Heart left ventricle (tissue), 16 donors: ENCODE measurements at regions of chr14 and their contacts with region 1.

Region 1: DNA sequence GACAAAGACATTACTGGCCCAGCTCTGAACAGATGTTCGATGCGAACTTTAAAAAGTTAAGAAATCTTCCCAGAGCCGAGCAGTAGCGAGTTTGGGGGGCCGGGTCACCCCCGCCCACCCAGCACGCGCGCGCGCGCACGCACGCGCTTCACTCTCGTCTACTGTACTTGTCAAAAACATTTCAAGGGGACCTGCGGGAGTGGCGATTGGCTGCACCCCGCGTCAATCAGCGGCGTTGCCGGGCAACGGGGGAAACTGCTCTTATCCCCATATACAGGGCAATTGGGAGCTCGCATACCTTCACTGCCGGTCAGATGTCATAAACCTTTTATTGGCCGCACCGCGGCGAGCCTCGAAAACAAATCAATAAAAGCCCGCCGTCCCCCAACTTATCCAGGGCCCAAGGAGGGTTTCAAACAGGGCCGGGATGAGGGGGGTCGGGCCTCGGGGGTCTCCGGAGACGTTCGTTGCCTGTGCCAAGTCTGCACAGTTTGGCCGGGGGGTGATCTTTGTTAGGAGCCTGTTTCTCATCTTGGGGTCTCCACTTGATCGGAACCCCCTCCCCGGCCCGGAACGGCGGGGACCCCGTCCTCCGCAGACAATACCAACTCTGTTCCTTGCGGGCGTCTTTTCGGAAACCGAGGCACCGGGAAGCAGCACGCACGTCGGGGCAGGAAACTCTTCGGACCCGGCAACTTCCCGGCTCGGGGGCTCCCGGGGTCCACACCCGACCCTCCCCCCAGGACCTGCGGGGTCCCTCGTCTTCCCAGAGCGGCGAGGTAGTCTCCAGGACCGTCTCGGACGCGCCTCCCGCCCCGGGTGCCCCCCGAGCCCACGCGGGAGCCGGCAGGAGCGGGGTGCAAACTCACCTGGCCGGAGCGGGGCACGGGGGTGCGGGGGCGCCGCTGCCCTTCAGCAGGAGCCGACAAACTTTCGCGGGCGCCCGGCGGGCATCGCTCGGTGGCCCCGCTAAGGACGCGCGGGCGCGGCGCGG is 734 bp downstream of the FOXN3 start:
- DNase-seq: peak; percentile 97 to 100 (median 99)
- ATAC-seq: peak; percentile 85 to 92 (median 88)
- H3K4me3 ChIP-seq: peak overlapping the region; percentile 66 to 98 (median 94)
- H3K27ac ChIP-seq: peak overlapping the region; percentile 80 to 99 (median 94)
- H3K4me1 ChIP-seq: peaks cover 0 to 44% (median 30%) of the 10 kb centered on the region in 12 donors
- H3K27me3 ChIP-seq: no peaks in the 10 kb centered on the region
- CTCF ChIP-seq: no peak
- POLR2A ChIP-seq: peak in 1 of 2 donors; percentile 56

Region 2: DNA sequence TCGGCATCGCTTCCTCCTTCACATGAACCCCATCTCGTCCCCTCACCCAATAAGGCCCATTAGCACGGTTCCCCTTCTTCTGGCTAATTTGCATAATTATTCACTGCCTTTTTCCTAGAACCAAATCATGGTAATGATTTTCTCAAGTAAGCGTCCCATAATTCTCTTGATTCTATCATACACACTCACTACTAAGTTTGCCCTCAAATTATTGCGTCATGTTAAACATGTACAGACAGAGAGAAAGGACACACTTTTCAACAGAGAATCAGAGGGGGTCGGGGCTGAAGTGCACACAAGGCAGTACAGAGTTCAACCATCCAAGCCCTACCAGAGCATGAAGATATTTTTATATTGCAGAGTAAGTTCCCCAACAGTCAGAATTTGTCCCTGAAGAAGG is 255.9 kb before region 1 on chr14:
- intact Hi-C with region 1: no loop called
- DNase-seq: no peak
- ATAC-seq: no peak
- H3K4me3 ChIP-seq: no peak overlapping the region
- H3K27ac ChIP-seq: no peak overlapping the region
- H3K4me1 ChIP-seq: peaks cover 0 to 20% (median 13%) of the 10 kb centered on the region in 12 donors
- H3K27me3 ChIP-seq: no peaks in the 10 kb centered on the region
- CTCF ChIP-seq: no peak
- POLR2A ChIP-seq: no peak

Region 3: GRCh38 chr14:89185919-89186855 is 230.1 kb before region 1 on chr14:
- intact Hi-C with region 1: loop called in 3 of 10 experiments (anchors 5 to 10 kb)
- DNase-seq: no peak
- ATAC-seq: peak; percentile 61 to 76 (median 69)
- H3K4me3 ChIP-seq: no peak overlapping the region
- H3K27ac ChIP-seq: peak overlapping the region in 11 of 12 donors; percentile 50 to 80 (median 68)
- H3K4me1 ChIP-seq: peaks cover 4 to 47% (median 35%) of the 10 kb centered on the region in 12 donors
- H3K27me3 ChIP-seq: no peaks in the 10 kb centered on the region
- CTCF ChIP-seq: peak in 1 of 12 donors; percentile 25
- POLR2A ChIP-seq: no peak

Region 4: DNA sequence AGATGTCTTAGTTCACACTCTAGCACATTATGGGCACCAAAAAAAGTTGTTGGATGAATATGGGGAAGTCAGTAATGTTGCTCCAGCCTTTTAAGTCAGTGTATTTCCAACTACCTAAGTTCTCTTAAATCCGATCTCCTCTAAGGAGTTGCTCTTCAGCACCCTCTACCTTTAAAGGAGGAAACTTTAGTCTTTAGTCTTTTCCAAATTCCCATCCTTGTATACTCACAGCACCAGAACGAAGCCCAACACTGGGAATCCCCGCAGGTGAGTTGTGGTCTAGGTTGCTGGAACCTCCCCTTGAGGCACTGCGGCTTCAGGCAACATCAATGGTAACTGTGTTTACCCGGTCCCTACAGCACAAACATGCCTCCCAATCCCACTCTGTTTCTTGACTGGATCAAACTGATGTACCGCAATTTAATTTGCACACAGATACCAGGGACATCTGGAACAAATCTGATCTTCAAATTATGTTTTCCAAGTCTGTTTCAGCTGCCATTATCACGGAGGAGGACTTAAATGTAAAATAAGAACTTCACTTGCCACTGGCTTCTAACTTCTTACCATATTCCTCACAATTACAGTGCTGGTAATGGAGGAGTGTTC is 178.3 kb before region 1 on chr14:
- intact Hi-C with region 1: loop called in 2 of 10 experiments (anchors 5 to 10 kb)
- DNase-seq: no peak
- ATAC-seq: peak in 1 of 4 donors; percentile 14
- H3K4me3 ChIP-seq: no peak overlapping the region
- H3K27ac ChIP-seq: no peak overlapping the region
- H3K4me1 ChIP-seq: peaks cover 2 to 53% (median 23%) of the 10 kb centered on the region in 12 donors
- H3K27me3 ChIP-seq: no peaks in the 10 kb centered on the region
- CTCF ChIP-seq: peak in 11 of 12 donors; percentile 7 to 53 (median 26)
- POLR2A ChIP-seq: no peak

Region 5: DNA sequence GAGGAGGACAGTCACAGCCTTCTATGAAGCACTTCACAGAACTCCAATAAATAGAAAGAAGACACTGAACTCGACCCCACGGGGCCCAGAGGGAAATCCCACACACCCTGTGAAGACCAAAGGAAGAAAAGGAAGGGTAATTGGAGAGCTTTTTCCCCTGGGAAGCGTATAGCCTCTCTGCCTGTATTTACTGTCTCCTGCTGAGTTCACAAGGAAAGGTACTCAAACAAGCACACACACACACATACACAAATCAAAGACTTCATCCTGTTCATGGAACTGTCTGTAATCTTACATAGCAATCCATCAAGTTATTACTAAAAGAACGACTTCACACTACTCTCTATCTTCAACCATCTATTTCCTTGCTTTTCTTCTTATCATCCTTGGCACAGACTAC is 14.5 kb before region 1 on chr14:
- intact Hi-C with region 1: no loop called
- DNase-seq: peak in 1 of 5 donors; percentile 16
- ATAC-seq: no peak
- H3K4me3 ChIP-seq: no peak overlapping the region
- H3K27ac ChIP-seq: no peak overlapping the region
- H3K4me1 ChIP-seq: peaks cover 3 to 55% (median 33%) of the 10 kb centered on the region in 12 donors
- H3K27me3 ChIP-seq: no peaks in the 10 kb centered on the region
- CTCF ChIP-seq: no peak
- POLR2A ChIP-seq: no peak

Region 6: GRCh38 chr14:89445273-89445973 is 29.1 kb after region 1 on chr14:
- intact Hi-C with region 1: no loop called
- DNase-seq: no peak
- ATAC-seq: peak in 1 of 4 donors; percentile 33
- H3K4me3 ChIP-seq: no peak overlapping the region
- H3K27ac ChIP-seq: peak overlapping the region in 1 of 12 donors; percentile 83
- H3K4me1 ChIP-seq: peaks cover 0 to 57% (median 10%) of the 10 kb centered on the region in 12 donors
- H3K27me3 ChIP-seq: no peaks in the 10 kb centered on the region
- CTCF ChIP-seq: no peak
- POLR2A ChIP-seq: no peak

Region 7: DNA sequence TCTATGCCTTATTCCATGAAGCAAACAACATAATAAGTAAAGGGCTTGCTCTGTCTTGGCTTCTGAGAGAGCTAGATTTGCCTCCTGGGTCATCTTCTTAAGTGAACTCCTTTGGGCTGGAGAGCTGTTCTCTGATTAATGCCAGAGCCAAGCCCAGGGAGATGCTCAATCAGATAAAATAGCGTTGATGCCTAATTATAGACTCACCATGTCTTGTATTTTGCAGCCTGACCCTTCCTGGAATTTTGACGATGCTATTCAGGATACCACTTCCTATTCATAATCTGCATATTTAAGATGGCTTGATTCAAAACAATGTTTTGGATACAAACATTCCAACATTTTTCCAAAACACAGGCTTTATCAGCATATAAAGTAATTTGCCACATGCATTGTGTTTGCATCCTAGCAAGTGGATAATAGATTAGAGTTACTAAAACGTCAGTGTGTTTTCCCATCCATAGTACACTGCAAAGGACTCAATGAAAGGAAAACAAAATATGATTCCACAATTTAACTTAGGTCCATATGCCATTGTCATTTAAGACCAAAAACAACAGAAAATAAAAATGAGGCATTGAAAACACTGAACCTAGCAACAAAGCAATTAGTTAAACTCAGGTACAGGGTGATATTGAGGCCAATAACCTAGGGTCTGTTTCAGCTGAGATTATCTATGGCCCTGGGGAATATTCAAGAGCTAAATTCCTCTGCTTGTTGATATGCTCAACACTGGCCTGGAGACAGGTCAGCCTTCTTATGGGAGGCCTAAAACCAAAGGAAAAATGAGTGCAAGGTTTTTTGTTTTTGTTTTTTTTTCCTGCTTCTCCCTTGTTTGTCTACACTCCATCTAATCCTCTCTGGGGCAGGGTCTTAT is 184.9 kb after region 1 on chr14:
- intact Hi-C with region 1: loop called in 1 of 10 experiments (anchors 5 kb)
- DNase-seq: no peak
- ATAC-seq: peak; percentile 60 to 82 (median 78)
- H3K4me3 ChIP-seq: no peak overlapping the region
- H3K27ac ChIP-seq: peak overlapping the region in 8 of 12 donors; percentile 18 to 68 (median 45)
- H3K4me1 ChIP-seq: peaks cover 5 to 41% (median 22%) of the 10 kb centered on the region in 12 donors
- H3K27me3 ChIP-seq: no peaks in the 10 kb centered on the region
- CTCF ChIP-seq: no peak
- POLR2A ChIP-seq: no peak

Region 8: DNA sequence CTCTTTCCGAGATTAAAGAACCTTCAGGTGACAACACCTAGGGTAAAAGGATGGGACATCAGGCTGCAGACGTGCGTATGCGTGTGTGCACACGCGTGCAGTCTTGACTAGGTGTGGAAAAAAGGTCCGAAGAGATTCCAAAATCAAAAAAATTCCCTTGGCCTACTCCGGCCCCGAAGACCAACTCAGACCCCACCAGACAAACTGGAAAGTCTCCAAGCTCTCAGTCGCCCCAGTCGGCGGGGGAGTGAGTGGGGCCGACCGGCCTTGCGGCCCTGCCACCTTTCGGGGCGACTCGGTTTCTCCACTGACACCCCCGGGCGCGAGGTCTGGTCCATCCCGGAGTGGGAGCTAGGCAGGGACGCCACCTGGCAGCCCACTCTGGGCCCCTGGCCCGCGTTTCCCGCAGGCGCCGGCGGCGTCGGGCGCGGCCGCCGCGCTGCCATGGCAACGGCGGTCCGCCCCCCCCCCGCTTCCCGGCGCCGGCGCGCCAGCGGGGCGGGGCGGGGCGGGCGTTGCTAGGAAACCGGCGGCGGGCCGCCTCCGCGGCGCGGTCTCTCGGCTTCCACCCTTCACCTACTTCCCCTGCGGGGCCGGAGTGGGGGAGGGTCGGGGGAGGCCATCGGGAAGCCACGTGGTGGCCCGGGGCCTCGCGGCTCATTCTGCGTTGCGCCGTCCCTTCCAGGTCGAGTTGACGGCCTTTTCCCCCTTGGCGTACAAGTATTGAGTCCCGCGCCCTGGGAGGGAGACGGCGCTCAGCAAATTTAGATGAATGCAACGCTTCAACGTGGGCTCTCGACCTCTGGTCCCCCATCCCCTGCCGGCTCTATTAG is 285.1 kb after region 1 on chr14:
- intact Hi-C with region 1: loop called in 4 of 10 experiments (anchors 2 to 5 kb)
- DNase-seq: peak; percentile 91 to 97 (median 92)
- ATAC-seq: peak; percentile 89 to 97 (median 95)
- H3K4me3 ChIP-seq: peak overlapping the region; percentile 54 to 77 (median 66)
- H3K27ac ChIP-seq: peak overlapping the region; percentile 48 to 92 (median 78)
- H3K4me1 ChIP-seq: peaks cover 0 to 20% (median 12%) of the 10 kb centered on the region in 12 donors
- H3K27me3 ChIP-seq: no peaks in the 10 kb centered on the region
- CTCF ChIP-seq: no peak
- POLR2A ChIP-seq: peak in 1 of 2 donors; percentile 12

Region 9: DNA sequence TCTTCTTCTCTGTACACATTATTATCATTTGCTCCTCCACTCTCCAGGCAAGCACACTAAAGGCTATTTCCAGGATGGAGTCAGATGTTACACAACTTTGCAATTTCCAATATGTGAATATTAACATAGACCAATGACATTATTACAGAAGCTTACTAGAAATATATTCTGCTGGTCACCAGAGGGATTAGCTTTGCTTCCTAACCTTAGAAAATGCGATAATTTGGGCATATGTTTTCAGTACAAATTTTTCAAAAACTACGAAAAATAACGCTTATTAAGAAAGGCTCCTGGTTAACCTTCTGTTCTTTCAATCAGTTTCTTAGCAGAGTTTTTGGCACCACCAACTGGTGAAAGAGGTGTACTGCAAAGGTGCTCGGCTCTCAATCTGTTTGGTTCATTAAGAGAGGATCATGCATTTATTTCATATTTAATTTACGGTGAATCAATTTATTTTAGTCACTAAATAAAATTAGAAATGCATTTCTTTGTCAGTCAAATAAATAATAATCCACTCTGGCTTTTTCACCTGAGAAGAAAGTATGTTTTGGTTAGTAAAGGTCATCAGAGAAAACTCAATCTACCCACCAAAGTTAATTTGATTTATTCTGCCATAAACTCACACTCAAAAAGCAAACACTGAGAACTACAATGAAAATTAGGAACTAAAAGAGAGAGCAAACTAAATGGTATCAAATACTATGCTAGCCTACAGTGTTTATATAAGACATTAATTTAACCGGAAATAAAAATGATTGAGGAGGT is 499.0 kb after region 1 on chr14:
- intact Hi-C with region 1: loop called in 3 of 10 experiments (anchors 10 kb)
- DNase-seq: peak in 3 of 5 donors; percentile 33 to 50 (median 47)
- ATAC-seq: peak in 2 of 4 donors; percentile 61 to 80
- H3K4me3 ChIP-seq: no peak overlapping the region
- H3K27ac ChIP-seq: no peak overlapping the region
- H3K4me1 ChIP-seq: peaks cover 0 to 12% (median 0%) of the 10 kb centered on the region in 12 donors
- H3K27me3 ChIP-seq: no peaks in the 10 kb centered on the region
- CTCF ChIP-seq: peak; percentile 83 to 98 (median 96)
- POLR2A ChIP-seq: no peak